ENCODE measurements at regions of chr12 and their contacts with region 1.

Region 1: GRCh38 chr12:49776413-49776812 is 35.1 kb downstream of the TMBIM6 start:
- DNase-seq: peak; percentile 78
- ATAC-seq: peak; percentile 85
- H3K4me3 Mint-ChIP-seq: no peak overlapping the region
- H3K27ac Mint-ChIP-seq: peak overlapping the region; percentile 48
- H3K4me1 Mint-ChIP-seq: peaks cover 20% of the 10 kb centered on the region
- H3K27me3 Mint-ChIP-seq: peaks cover 20% of the 10 kb centered on the region

Region 2: GRCh38 chr12:49636979-49637755 is 139.2 kb before region 1 on chr12:
- CTCF ChIA-PET with region 1: interaction called, 27 read pairs
- POLR2A ChIA-PET with region 1: no interaction called
- DNase-seq: peak; percentile 79
- ATAC-seq: peak; percentile 89
- H3K4me3 Mint-ChIP-seq: no peak overlapping the region
- H3K27ac Mint-ChIP-seq: peak overlapping the region; percentile 28
- H3K4me1 Mint-ChIP-seq: peaks cover 31% of the 10 kb centered on the region
- H3K27me3 Mint-ChIP-seq: no peaks in the 10 kb centered on the region

Region 3: DNA sequence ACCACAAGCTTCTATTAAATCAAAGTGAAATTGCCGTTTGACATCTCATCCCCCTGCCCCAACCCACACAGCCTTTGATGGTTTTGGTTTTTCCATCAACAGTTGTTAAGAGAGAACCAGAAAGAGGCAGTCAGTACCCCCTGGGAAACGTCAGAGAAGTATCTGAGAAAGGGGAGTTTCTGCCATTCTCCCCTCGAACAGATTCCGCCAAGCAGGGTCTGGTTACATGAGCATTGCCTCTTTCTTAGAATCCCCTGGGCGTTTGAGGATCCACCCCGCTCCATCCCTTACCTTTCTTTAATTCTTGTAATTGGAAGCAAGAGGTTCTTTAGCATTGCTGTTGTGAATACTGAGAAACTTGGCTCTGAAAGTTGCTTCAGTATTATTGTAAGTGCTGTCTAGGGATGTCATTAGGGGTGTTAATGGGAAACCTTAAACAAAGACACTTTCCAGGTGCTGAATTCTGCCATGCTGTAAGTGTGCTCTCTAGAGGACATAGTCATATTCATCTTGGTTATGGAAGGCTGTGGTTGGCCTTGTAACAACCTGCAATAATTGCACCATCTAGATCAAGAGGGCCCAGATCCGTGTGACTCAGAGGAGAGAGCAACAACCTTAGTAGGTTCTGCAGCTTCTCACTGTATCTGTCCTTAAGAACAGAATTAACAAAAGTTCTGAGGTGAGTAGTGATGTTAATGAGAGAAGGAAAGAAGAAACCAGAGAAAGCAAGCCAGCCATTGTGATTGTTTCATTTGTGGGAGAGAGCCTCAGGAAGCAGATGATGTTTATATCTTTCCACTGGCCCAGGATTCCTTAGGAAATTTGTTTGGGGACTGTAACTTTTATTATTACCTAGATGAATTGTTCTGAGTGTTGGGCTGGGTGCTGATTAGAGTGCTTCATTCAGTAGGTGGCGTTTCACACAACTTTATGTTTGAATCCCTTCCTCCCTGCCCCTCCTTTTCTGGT is 26.1 kb before region 1 on chr12:
- CTCF ChIA-PET with region 1: interaction called, 20 read pairs
- POLR2A ChIA-PET with region 1: no interaction called
- DNase-seq: peak; percentile 59
- ATAC-seq: peak; percentile 85
- H3K4me3 Mint-ChIP-seq: peak overlapping the region; percentile 9
- H3K27ac Mint-ChIP-seq: peak overlapping the region; percentile 72
- H3K4me1 Mint-ChIP-seq: peaks cover 76% of the 10 kb centered on the region
- H3K27me3 Mint-ChIP-seq: no peaks in the 10 kb centered on the region

Region 4: GRCh38 chr12:49800421-49801140 is 24.2 kb after region 1 on chr12:
- CTCF ChIA-PET with region 1: interaction called, 17 read pairs
- POLR2A ChIA-PET with region 1: no interaction called
- DNase-seq: no peak
- ATAC-seq: no peak
- H3K4me3 Mint-ChIP-seq: no peak overlapping the region
- H3K27ac Mint-ChIP-seq: no peak overlapping the region
- H3K4me1 Mint-ChIP-seq: no peaks in the 10 kb centered on the region
- H3K27me3 Mint-ChIP-seq: no peaks in the 10 kb centered on the region

Region 5: GRCh38 chr12:49821373-49822287 is 45.2 kb after region 1 on chr12:
- CTCF ChIA-PET with region 1: interaction called, 34 read pairs
- POLR2A ChIA-PET with region 1: no interaction called
- DNase-seq: no peak
- ATAC-seq: no peak
- H3K4me3 Mint-ChIP-seq: peak overlapping the region; percentile 34
- H3K27ac Mint-ChIP-seq: peak overlapping the region; percentile 93
- H3K4me1 Mint-ChIP-seq: peaks cover 37% of the 10 kb centered on the region
- H3K27me3 Mint-ChIP-seq: no peaks in the 10 kb centered on the region

Region 6: GRCh38 chr12:49842519-49843352 is 66.3 kb after region 1 on chr12 and contains the start of gene BCDIN3D:
- CTCF ChIA-PET with region 1: interaction called, 129 read pairs
- POLR2A ChIA-PET with region 1: interaction called, 3 read pairs
- DNase-seq: peak; percentile 93
- ATAC-seq: peak; percentile 96
- H3K4me3 Mint-ChIP-seq: peak within 1 kb of the TSS; percentile 92
- H3K27ac Mint-ChIP-seq: peak within 1 kb of the TSS; percentile 86
- H3K4me1 Mint-ChIP-seq: peaks cover 51% of the 10 kb centered on the region
- H3K27me3 Mint-ChIP-seq: no peaks in the 10 kb centered on the region
- total RNA-seq, gene BCDIN3D: 7.3 to 7.4 TPM